Caco-2 (cell line): ENCODE measurements at regions of chr5 and their contacts with region 1.

Region 1: DNA sequence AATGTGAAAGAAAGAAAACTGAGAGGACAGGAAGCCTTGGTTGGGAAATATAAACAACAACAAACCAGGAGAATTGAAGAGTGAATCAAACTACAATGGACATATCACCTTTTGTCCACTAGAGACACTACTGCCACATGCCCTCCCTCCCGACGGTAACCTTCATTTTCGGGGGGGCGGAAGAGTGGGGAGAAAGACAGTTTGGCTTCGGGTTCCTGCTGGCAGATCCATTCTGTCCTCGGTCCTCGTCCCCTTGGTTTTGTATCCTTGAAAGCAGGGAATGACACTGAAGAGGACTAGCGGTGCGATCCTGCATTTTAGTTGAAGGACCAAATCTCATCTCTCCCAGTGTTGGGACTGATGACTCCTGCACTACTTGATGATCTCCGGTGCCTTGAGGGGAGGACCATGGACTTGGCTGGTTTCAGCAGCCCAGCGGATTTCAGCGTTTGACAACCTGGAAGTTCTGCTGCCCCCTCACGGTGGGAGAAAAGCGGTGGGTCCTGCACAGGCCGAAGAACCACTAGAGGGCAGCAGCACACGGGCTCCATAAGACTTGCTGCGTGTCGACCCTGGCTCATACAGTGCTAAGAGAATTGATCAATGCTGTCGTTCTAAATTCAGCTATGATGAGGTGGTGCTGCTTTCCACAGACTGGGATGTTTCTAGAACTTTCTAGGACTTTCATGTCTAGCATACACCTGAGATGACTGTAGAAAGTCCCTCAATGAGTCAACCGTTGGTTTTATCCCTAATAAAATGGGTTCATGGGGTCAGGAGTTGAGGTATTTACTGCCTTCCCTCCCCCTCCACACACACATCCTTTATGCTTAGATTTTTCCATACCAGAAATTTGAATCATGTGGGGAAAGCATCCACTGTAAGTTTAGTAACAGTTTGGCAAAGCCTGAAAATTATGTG is 15.1 kb upstream of the ZNF131 start:
- DNase-seq: peak; percentile 93
- H3K4me3 ChIP-seq: peak overlapping the region; percentile 21
- H3K4me3 Mint-ChIP-seq: peak overlapping the region; percentile 68
- H3K27ac Mint-ChIP-seq: peak overlapping the region; percentile 49
- H3K4me1 ChIP-seq: peaks cover 8% of the 10 kb centered on the region; the same call in 1 of the 2 replicates
- H3K4me1 Mint-ChIP-seq: peaks cover 8% of the 10 kb centered on the region
- H3K27me3 ChIP-seq: no peaks in the 10 kb centered on the region
- H3K27me3 Mint-ChIP-seq: no peaks in the 10 kb centered on the region
- CTCF ChIP-seq: peak; percentile 99 to 100

Region 2: GRCh38 chr5:43040287-43041098 is 65.1 kb before region 1 on chr5 and contains the start of gene ANXA2R:
- CTCF ChIA-PET with region 1: interaction called, 3 read pairs
- POLR2A ChIA-PET with region 1: no interaction called
- intact Hi-C with region 1: loop called (anchors 1 kb)
- DNase-seq: peak; percentile 92 to 93
- H3K4me3 ChIP-seq: peak within 1 kb of the TSS; percentile 80
- H3K4me3 Mint-ChIP-seq: peak within 1 kb of the TSS; percentile 86
- H3K27ac Mint-ChIP-seq: peak within 1 kb of the TSS; percentile 58
- H3K4me1 ChIP-seq: no peaks in the 10 kb centered on the region
- H3K4me1 Mint-ChIP-seq: no peaks in the 10 kb centered on the region
- H3K27me3 ChIP-seq: no peaks in the 10 kb centered on the region
- H3K27me3 Mint-ChIP-seq: no peaks in the 10 kb centered on the region
- CTCF ChIP-seq: peak; percentile 87 to 88
- total RNA-seq, gene ANXA2R: 3.1 and 4.1 TPM in 2 replicates

Region 3: DNA sequence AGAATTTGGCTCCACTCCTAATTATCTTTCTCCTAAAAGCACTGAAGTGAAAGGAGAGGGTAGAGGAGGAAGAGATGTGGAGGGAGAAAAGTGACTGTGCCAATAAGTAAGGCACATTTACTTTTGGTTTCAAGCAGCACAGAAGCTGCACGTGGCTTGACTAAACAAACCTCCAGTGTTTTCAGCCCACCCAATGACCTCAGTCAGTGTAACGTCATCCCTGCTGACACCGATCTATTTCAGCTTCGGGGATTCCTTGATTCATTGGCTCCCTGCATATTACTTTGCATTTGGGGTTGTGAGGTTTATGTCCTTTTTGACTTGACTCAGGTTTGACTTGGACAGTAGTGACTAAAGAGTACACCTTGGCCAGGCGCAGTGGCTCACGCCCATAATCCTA is 50.8 kb after region 1 on chr5:
- CTCF ChIA-PET with region 1: no interaction called
- POLR2A ChIA-PET with region 1: no interaction called
- intact Hi-C with region 1: loop called (anchors 5 kb)
- DNase-seq: no peak
- H3K4me3 ChIP-seq: no peak overlapping the region
- H3K4me3 Mint-ChIP-seq: no peak overlapping the region
- H3K27ac Mint-ChIP-seq: no peak overlapping the region
- H3K4me1 ChIP-seq: no peaks in the 10 kb centered on the region
- H3K4me1 Mint-ChIP-seq: no peaks in the 10 kb centered on the region
- H3K27me3 ChIP-seq: no peaks in the 10 kb centered on the region
- H3K27me3 Mint-ChIP-seq: no peaks in the 10 kb centered on the region
- CTCF ChIP-seq: no peak